Activated T-helper 2 cell treated with anti-CD3 and anti-CD28 coated beads, Interferon-gamma antibody, Interleukin-2, Interleukin-4, amounts not matched to agents 10 μg/mL and 5 μg/mL and 100 μg/mL, durations not matched to agents 14 hours and 24 hours and 36 hours (primary cell): ENCODE measurements at regions of chr1 and their contacts with region 1.

Region 1: GRCh38 chr1:109426278-109427170 is at the start of gene PSMA5:
- DNase-seq: peak; percentile 96
- H3K4me3 Mint-ChIP-seq: peak within 1 kb of the TSS; percentile 95
- H3K27ac Mint-ChIP-seq: peak within 1 kb of the TSS; percentile 97
- H3K4me1 Mint-ChIP-seq: peaks cover 28% of the 10 kb centered on the region
- H3K27me3 Mint-ChIP-seq: no peaks in the 10 kb centered on the region
- total RNA-seq, gene PSMA5: 257 and 281 TPM in 2 replicates

Region 2: GRCh38 chr1:109213785-109214468 is 212.6 kb before region 1 on chr1 and contains the start of gene SARS1:
- intact Hi-C with region 1: loop called (anchors 2 kb)
- DNase-seq: peak; percentile 86
- H3K4me3 Mint-ChIP-seq: peak within 1 kb of the TSS; percentile 98
- H3K27ac Mint-ChIP-seq: peak within 1 kb of the TSS; percentile 89
- H3K4me1 Mint-ChIP-seq: peaks cover 28% of the 10 kb centered on the region
- H3K27me3 Mint-ChIP-seq: peaks cover 3% of the 10 kb centered on the region
- total RNA-seq, gene SARS1: 128 and 129 TPM in 2 replicates

Region 3: DNA sequence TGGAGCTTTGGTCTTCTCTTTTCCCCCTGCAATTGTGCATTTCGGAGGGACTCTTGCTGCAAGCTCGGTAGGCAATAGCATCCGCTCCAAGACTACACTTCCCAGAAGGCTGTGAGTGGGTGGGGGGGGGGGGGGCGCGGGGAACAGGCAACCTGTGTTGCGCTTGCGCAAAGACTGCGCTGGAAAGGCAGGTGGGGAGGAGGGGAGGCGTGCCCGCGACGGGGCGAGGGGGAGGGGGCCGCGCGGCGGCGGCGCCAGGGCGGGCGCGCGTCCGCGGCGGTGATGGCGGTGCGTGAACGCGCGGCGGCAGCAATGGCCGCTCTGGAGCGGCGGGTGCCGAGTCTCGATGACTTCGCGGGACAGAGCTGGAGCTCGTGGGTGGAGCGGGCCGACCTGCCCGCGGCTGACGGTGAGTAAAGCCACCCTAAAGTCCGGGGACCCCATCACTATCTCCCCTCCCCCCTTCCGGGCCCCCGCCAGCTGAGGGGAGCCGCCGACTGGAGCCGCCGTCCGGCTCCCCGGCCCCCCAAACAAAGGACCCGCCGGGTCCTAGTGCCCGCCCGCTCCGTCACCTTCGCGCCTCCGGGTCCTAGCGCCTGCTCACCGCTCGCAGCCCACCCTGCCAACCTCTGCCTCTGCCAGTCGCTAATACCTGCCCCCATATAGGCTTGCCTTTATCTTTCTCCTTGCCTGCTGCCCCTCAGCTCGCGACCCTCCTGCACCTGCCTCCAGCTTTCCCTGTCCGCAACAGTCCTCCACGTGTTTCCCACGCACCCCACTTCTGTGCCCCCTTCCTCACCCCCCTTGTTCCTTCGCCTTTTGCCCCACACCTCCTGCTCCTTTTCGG is 57.4 kb after region 1 on chr1 and contains the start of gene ATXN7L2:
- intact Hi-C with region 1: loop called (anchors 1 kb)
- DNase-seq: peak; percentile 86
- H3K4me3 Mint-ChIP-seq: peak within 1 kb of the TSS; percentile 91
- H3K27ac Mint-ChIP-seq: peak within 1 kb of the TSS; percentile 86
- H3K4me1 Mint-ChIP-seq: peaks cover 30% of the 10 kb centered on the region
- H3K27me3 Mint-ChIP-seq: peaks cover 21% of the 10 kb centered on the region
- total RNA-seq, gene ATXN7L2: 11.9 and 12.9 TPM in 2 replicates

Region 4: DNA sequence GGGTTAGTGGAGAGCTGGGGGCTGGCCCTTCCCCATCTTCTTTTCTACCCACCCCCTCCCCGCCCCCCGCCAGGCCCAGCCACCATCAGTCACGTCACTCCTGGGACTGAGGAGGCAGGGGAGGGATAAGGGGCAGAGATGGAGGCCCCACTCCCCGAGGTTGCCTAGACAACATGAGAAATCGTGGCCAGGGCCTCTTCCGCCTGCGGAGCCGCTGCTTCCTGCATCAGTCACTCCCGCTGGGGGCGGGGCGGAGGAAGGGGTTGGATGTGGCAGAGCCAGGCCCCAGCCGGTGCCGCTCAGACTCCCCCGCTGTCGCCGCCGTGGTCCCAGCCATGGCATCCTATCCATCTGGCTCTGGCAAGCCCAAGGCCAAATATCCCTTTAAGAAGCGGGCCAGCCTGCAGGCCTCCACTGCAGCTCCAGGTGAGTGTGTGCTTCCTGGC is 194.3 kb after region 1 on chr1:
- intact Hi-C with region 1: loop called (anchors 5 kb)
- DNase-seq: peak; percentile 97
- H3K4me3 Mint-ChIP-seq: peak overlapping the region; percentile 93
- H3K27ac Mint-ChIP-seq: peak overlapping the region; percentile 96
- H3K4me1 Mint-ChIP-seq: peaks cover 63% of the 10 kb centered on the region
- H3K27me3 Mint-ChIP-seq: no peaks in the 10 kb centered on the region

Region 5: GRCh38 chr1:110338886-110339406 is 912.4 kb after region 1 on chr1 and contains the start of gene RBM15:
- intact Hi-C with region 1: loop called (anchors 2 kb)
- DNase-seq: peak; percentile 98
- H3K4me3 Mint-ChIP-seq: no peak within 1 kb of the TSS
- H3K27ac Mint-ChIP-seq: no peak within 1 kb of the TSS
- H3K4me1 Mint-ChIP-seq: peaks cover 52% of the 10 kb centered on the region
- H3K27me3 Mint-ChIP-seq: no peaks in the 10 kb centered on the region
- total RNA-seq, gene RBM15: 55.5 TPM in 2 replicates